Panc1 (cell line): ENCODE measurements at regions of chr7 and their contacts with region 1.

Region 1: DNA sequence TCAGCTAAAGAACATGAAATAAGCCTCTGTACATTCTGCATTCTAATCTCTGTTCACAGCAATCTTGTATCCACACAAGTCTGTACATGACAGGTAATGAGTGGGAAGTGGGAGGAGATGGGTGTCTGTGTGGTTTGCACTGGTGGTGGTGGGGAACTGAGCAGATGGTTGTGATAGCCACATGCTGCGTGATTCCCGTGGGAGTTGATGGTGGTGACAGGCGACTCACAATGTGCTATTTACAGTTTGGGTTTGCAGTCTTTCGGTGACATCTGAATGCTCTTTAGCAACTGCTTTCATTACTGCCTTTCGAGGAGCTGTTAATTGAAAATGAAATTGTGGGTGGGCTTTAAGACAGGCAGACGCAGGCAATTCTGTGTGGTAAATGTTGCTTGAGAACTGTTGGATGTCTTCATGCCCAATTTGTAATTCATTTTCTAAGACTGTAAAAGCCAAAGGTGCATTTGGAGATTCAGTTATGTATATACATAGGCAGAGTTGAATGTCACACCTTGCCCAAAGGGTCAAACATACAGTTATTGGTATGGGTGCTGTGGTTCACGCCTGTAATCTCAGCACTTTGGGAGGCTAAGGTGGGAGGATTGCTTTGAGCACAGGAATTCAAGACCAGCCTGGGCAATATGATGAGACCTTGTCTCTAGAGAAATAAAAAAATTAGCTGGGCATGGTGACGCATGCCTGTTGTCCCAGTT is 308.2 kb downstream of the AUTS2 start:
- DNase-seq: no peak
- ATAC-seq: no peak
- H3K4me3 ChIP-seq: no peak overlapping the region
- H3K27ac ChIP-seq: no peak overlapping the region
- H3K4me1 ChIP-seq: no peaks in the 10 kb centered on the region
- H3K27me3 ChIP-seq: no peaks in the 10 kb centered on the region
- CTCF ChIP-seq: no peak

Region 2: DNA sequence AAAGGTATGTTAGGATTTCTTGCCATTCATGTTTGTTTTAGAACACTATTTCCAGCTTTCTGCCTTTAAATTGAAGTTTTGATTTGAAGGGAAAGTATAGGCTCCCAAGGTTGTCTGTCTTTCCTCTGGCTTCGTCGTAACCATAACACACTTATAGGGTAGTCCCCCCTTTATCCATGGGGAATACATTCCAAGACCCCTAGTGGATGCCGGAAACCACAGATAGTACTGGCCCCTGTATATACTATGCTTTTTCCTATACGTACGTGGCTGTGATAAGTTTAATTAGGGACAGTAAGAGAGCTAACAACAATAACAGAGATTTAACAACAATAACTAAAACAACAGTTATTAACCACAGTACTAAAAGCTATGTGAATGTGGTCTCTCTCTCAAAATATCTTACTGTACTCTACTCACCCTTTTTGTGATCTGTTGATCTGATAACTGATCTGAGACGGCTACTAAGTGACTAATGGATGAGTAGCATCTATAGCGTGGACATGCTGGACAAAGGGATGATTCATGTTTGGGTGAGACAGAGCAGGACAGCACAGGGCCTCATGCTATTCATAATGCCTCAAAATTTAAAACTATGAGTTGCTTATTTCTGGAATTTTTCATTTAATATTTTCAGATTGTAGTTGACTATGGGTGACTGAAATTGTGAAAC is 35.1 kb before region 1 on chr7:
- CTCF ChIA-PET with region 1: no interaction called
- POLR2A ChIA-PET with region 1: interaction called, 19 read pairs
- in situ Hi-C with region 1: no loop called
- intact Hi-C with region 1: no loop called
- DNase-seq: peak; percentile 24
- ATAC-seq: no peak
- H3K4me3 ChIP-seq: no peak overlapping the region
- H3K27ac ChIP-seq: no peak overlapping the region
- H3K4me1 ChIP-seq: no peaks in the 10 kb centered on the region
- H3K27me3 ChIP-seq: no peaks in the 10 kb centered on the region
- CTCF ChIP-seq: no peak